Colonic mucosa (tissue), 4 donors: ENCODE measurements at regions of chr4 and their contacts with region 1.

Region 1: DNA sequence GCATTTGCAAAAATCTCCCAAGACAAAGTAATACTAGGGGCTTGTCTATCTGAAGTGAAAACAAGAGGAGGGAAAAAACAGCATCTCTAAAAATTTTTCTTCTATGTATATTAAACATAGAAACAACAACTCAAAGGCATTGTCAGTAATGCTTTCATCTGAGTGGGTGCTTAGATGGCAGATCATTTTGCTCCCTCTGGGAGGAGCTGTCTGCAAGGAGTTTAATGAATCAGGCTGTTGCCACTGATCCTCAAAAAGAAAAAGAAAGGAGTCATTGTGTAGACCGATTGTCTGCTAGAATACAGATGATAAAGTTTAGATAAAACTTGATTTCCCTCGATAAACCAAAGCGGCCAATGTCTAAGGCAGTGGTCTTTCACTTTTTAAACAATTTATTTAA is 49.7 kb upstream of the KLHL8 start:
- DNase-seq: no peak
- H3K4me3 ChIP-seq: no peak overlapping the region
- H3K27ac ChIP-seq: no peak overlapping the region
- H3K4me1 ChIP-seq: no peaks in the 10 kb centered on the region
- H3K27me3 ChIP-seq: no peaks in the 10 kb centered on the region
- CTCF ChIP-seq: peak; percentile 30

Region 2: DNA sequence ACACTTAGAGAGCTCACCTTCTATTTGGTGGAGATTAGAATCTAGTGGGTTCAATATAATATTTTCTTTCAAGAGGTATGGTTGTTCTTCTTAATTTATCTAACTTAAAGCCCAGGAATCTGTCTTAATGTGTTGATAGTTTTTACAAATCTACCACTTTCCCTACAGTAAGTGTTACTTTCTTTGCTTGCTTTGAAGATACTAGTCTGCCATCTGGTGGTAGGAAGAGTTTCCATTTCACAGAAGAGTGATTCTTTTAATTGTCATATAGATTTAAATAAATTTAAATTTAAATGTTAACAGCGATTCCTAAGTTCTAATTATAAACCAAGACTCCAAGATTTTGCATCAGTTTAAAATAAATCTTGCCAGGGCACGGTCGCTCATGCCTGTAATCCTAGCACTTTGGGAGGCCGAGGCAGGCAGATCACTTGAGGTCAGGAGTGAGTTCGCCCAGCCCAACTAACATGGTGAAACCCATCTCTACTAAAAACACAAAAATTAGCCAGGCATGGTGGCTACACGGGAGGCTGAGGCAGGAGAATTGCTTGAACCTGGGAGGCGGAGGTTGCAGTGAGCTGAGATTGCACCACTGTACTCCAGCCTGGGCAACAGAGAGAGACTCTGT is 195.7 kb after region 1 on chr4:
- intact Hi-C with region 1: loop called (anchors 5 kb)
- DNase-seq: no peak
- H3K4me3 ChIP-seq: no peak overlapping the region
- H3K27ac ChIP-seq: no peak overlapping the region
- H3K4me1 ChIP-seq: peaks cover 5% of the 10 kb centered on the region
- H3K27me3 ChIP-seq: no peaks in the 10 kb centered on the region
- CTCF ChIP-seq: peak; percentile 59